ENCODE measurements at regions of chr1 and their contacts with region 1.

Region 1: GRCh38 chr1:184075055-184076029 is 23.8 kb downstream of the TSEN15 start:
- DNase-seq: peak; percentile 21
- H3K4me3 Mint-ChIP-seq: no peak overlapping the region
- H3K27ac Mint-ChIP-seq: no peak overlapping the region
- H3K4me1 Mint-ChIP-seq: peaks cover 4% of the 10 kb centered on the region
- H3K27me3 Mint-ChIP-seq: no peaks in the 10 kb centered on the region

Region 2: DNA sequence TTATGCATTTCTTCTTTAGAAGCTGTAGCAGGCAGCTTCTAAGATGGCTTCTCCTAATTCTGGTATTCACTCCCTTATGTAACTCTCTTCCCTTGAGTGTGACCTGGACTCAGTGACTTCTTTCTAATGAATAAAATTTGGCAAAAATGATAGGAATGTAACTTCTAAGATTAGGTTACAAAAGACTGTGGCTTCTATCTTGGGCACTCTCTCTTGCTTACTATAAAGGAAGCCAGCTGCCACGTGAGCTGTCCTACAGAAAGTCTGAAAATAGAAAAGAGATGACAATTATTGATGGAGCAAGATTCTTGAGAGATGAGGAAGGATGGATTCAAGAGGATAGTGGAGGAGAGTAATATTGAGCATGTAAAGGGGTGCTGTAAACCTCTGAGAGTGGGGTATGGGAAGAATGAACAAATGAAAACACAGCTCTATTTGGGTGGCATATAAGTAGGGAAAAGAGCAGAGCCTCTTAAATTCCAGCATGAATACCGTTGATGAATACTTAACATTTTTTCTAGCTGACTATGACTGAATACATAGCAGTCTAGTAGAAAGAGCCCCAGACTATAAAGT is 18.3 kb before region 1 on chr1:
- CTCF ChIA-PET with region 1: no interaction called
- POLR2A ChIA-PET with region 1: no interaction called
- DNase-seq: no peak
- H3K4me3 Mint-ChIP-seq: no peak overlapping the region
- H3K27ac Mint-ChIP-seq: no peak overlapping the region
- H3K4me1 Mint-ChIP-seq: peaks cover 28% of the 10 kb centered on the region
- H3K27me3 Mint-ChIP-seq: no peaks in the 10 kb centered on the region

Region 3: DNA sequence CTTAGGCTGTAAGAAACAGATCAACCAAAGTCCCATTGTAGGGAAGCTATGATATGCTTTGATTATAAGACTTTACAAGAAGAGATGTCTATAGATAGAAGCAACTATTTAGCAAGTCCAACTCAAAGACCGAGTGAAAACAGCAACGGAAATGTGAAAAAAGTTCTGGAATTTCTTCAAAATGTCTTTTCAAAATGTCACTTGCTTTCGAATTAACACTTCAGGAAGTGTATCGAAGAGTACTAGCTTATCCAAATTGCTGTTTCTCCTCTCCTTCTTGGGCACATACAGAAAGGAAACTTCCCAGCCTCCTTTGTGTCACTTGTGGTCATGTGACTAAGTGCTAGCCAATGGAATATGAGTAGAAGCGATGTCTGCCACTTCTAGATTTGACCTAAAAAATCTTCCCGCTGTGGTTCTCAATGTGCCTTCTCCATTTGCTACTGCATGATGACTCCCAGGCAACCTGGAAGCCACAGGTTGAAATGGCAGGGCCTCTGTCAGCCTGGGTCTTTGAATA is 66.1 kb after region 1 on chr1:
- CTCF ChIA-PET with region 1: no interaction called
- POLR2A ChIA-PET with region 1: no interaction called
- DNase-seq: no peak
- H3K4me3 Mint-ChIP-seq: no peak overlapping the region
- H3K27ac Mint-ChIP-seq: no peak overlapping the region
- H3K4me1 Mint-ChIP-seq: no peaks in the 10 kb centered on the region
- H3K27me3 Mint-ChIP-seq: peaks cover 13% of the 10 kb centered on the region

Region 4: GRCh38 chr1:184222652-184223052 is 147.3 kb after region 1 on chr1:
- CTCF ChIA-PET with region 1: interaction called, 12 read pairs
- POLR2A ChIA-PET with region 1: no interaction called
- DNase-seq: peak; percentile 47
- H3K4me3 Mint-ChIP-seq: no peak overlapping the region
- H3K27ac Mint-ChIP-seq: no peak overlapping the region
- H3K4me1 Mint-ChIP-seq: no peaks in the 10 kb centered on the region
- H3K27me3 Mint-ChIP-seq: peaks cover 2% of the 10 kb centered on the region

Region 5: DNA sequence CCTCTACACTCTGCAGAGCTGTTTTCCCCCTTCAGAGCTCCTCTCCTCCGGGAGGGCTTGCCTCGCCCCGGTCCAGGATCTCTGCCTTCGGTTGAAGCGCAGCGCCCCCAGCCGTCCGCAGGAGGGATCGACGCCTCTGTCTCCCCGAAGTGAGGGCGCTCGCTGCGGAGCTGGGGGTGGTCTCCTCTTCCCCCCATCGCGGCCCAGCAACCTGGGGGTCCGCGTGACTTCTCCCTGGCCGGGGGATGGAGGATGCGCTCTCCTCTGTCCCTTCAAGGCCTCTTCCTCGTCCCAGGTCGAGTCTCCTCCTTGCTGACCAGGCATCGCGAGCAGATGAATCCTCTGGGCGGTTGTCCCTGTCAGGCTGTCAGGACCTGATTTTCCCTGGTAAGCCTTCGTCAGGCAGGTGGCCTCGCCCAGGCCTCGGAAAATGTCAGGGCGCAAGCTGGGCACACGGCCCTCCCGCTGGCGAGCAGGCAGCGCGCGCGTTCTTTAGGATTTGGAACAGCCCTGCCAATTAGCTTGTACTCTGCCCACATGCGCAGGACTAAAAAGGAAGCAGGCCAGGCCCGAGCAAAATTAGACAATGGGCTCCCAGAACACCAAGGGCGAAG is 588.8 kb after region 1 on chr1:
- CTCF ChIA-PET with region 1: interaction called, 14 read pairs
- POLR2A ChIA-PET with region 1: no interaction called
- DNase-seq: peak; percentile 58
- H3K4me3 Mint-ChIP-seq: no peak overlapping the region
- H3K27ac Mint-ChIP-seq: no peak overlapping the region
- H3K4me1 Mint-ChIP-seq: peaks cover 6% of the 10 kb centered on the region
- H3K27me3 Mint-ChIP-seq: peaks cover 6% of the 10 kb centered on the region